Activated naive CD4-positive, alpha-beta T cell treated with anti-CD3 and anti-CD28 coated beads, Interleukin-2, amount 10 ng/mL, durations not matched to agents 7 days and 5 days (primary cell): ENCODE measurements at regions of chr6 and their contacts with region 1.

Region 1: GRCh38 chr6:42043787-42044475 is 6.4 kb upstream of the TAF8 start:
- DNase-seq: peak; percentile 95
- H3K4me3 Mint-ChIP-seq: peak overlapping the region; percentile 64
- H3K27ac Mint-ChIP-seq: peak overlapping the region; percentile 98
- H3K4me1 Mint-ChIP-seq: peaks cover 90% of the 10 kb centered on the region
- H3K27me3 Mint-ChIP-seq: no peaks in the 10 kb centered on the region

Region 2: GRCh38 chr6:41775293-41776181 is 268.4 kb before region 1 on chr6:
- CTCF ChIA-PET with region 1: interaction called, 21 read pairs
- DNase-seq: peak; percentile 64
- H3K4me3 Mint-ChIP-seq: no peak overlapping the region
- H3K27ac Mint-ChIP-seq: no peak overlapping the region
- H3K4me1 Mint-ChIP-seq: peaks cover 14% of the 10 kb centered on the region
- H3K27me3 Mint-ChIP-seq: peaks cover 9% of the 10 kb centered on the region

Region 3: GRCh38 chr6:41787219-41787917 is 256.6 kb before region 1 on chr6 and contains the start of gene TOMM6:
- CTCF ChIA-PET with region 1: interaction called, 97 read pairs
- DNase-seq: peak; percentile 97
- H3K4me3 Mint-ChIP-seq: peak within 1 kb of the TSS; percentile 96
- H3K27ac Mint-ChIP-seq: peak within 1 kb of the TSS; percentile 97
- H3K4me1 Mint-ChIP-seq: peaks cover 17% of the 10 kb centered on the region
- H3K27me3 Mint-ChIP-seq: peaks cover 39% of the 10 kb centered on the region

Region 4: GRCh38 chr6:41846666-41847237 is 197.2 kb before region 1 on chr6:
- CTCF ChIA-PET with region 1: interaction called, 78 read pairs
- DNase-seq: peak; percentile 69
- H3K4me3 Mint-ChIP-seq: no peak overlapping the region
- H3K27ac Mint-ChIP-seq: no peak overlapping the region
- H3K4me1 Mint-ChIP-seq: peaks cover 11% of the 10 kb centered on the region
- H3K27me3 Mint-ChIP-seq: no peaks in the 10 kb centered on the region

Region 5: DNA sequence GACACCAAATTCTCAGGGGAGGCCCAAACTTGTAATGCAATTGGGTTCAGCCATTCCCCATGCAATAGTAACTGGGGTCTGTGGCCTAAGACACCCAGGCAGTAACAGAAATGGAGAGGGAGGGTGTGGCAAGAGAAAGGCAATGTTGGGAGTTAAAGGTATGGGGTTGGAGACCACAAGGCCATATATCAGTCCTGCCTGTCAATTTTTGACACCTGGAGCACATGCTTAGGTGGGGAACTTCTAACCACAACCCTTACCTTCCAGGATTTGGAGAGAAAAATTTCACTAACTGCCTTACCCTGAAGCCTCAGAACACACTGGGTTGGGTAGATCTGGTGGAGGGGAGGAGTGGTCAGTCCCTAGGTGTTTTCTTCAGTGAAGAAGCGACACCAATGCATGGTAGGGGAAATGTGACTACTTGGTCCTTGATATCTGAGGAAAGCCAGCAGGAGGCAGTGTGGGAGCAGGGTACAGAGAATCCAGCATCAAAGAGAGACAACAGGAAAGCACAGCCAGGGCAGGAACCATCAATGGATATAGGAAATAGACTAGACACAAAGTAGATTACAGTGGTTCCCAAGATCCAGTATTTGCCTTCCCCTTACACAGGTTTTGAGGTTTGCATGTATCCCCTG is 141.9 kb before region 1 on chr6:
- CTCF ChIA-PET with region 1: interaction called, 112 read pairs
- DNase-seq: peak; percentile 82
- H3K4me3 Mint-ChIP-seq: no peak overlapping the region
- H3K27ac Mint-ChIP-seq: peak overlapping the region; percentile 9
- H3K4me1 Mint-ChIP-seq: peaks cover 33% of the 10 kb centered on the region
- H3K27me3 Mint-ChIP-seq: no peaks in the 10 kb centered on the region

Region 6: GRCh38 chr6:41941280-41942066 is 102.5 kb before region 1 on chr6 and contains the start of gene CCND3:
- CTCF ChIA-PET with region 1: interaction called, 259 read pairs
- DNase-seq: peak; percentile 93
- H3K4me3 Mint-ChIP-seq: peak within 1 kb of the TSS; percentile 100
- H3K27ac Mint-ChIP-seq: peak within 1 kb of the TSS; percentile 96
- H3K4me1 Mint-ChIP-seq: peaks cover 54% of the 10 kb centered on the region
- H3K27me3 Mint-ChIP-seq: no peaks in the 10 kb centered on the region

Region 7: DNA sequence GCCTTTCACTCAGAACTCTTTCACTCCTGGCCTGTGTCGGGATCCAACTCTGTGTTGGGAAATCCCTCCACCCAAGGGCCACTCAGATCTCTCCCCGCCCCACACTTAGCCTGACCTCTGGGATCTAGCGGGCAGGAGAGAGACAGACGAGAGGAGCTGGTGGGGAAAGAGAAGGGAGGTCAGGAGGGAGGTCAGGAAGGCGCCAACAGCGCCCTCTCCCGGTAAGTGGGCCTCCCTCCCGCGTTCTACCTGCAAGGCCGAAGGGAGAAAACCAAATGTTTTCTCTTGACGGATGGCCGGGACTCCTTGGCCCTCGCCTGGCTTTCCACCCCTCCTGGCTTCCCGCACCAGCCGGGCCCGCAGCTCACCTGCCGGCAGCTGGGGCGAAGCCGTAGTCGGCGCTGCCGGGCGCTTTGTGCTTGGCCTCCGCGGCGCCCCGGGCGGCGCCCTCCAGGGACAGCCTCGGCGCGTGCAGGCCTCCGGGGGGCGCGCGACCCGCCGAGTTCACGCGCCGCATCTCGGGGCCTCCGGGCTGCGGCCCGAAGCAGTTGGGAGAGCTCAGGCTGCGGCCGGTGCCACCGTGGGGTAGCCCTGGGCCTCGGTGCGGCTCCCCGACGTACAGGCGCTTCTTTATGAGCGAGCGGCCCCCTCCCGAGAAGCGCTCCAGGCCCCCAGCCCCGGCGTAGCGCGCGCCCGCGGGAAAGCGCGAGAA is 60.3 kb after region 1 on chr6:
- CTCF ChIA-PET with region 1: interaction called, 20 read pairs
- DNase-seq: peak; percentile 77
- H3K4me3 Mint-ChIP-seq: peak overlapping the region; percentile 60
- H3K27ac Mint-ChIP-seq: peak overlapping the region; percentile 52
- H3K4me1 Mint-ChIP-seq: peaks cover 19% of the 10 kb centered on the region
- H3K27me3 Mint-ChIP-seq: peaks cover 54% of the 10 kb centered on the region